ENCODE measurements at regions of chr11 and their contacts with region 1.

Region 1: GRCh38 chr11:117712530-117712929 is 84.5 kb downstream of the DSCAML1 start:
- DNase-seq: no peak
- ATAC-seq: no peak

Region 2: GRCh38 chr11:117664897-117665296 is 47.6 kb before region 1 on chr11:
- intact Hi-C with region 1: loop called (anchors 1 kb)
- DNase-seq: no peak
- ATAC-seq: peak; percentile 65